Activated naive CD4-positive, alpha-beta T cell treated with anti-CD3 and anti-CD28 coated beads, Interleukin-2, amount 10 ng/mL, durations not matched to agents 7 days and 5 days (primary cell): ENCODE measurements at regions of chr2 and their contacts with region 1.

Region 1: DNA sequence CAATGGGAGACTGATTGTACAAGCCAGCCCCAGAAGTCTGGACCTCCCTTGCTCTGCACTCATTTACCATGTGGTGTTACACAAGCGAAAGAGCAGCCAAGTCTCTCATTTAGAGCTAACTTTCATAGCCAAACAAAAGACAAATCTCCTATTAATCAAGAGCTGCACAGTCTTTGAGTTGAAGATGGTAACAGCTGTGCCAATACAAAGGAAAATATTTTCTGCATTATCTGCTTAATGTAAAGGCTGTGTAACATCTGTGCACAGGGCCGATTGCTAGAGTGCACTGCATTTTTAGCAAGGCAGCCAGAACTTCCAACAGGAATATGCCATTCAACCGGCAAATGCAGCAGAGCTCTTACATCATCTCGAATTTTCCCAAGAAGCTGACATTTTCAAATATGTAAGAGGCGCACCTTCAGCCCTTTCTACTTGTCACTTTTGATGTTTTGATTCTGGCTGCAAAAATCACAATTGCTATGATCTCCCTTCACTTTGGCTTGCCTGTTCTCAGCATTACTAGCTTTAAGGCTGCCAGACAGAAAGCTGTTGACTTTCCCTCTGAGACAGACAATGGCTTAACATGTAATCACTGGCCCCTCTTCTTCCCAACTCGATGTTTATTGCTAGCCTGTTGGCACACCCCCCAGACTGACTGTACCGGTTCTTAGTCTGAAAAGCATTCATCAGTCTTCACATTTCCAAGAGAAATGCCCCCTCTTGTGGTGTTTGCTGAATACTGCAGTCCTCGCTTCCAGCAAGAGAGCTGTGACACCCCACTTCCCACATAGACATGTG is 96.9 kb upstream of the TANK start:
- DNase-seq: peak; percentile 78
- H3K4me3 Mint-ChIP-seq: no peak overlapping the region
- H3K27ac Mint-ChIP-seq: no peak overlapping the region
- H3K4me1 Mint-ChIP-seq: peaks cover 12% of the 10 kb centered on the region
- H3K27me3 Mint-ChIP-seq: peaks cover 8% of the 10 kb centered on the region

Region 2: GRCh38 chr2:160324161-160324800 is 739.1 kb before region 1 on chr2:
- CTCF ChIA-PET with region 1: interaction called, 11 read pairs
- DNase-seq: peak; percentile 53
- H3K4me3 Mint-ChIP-seq: no peak overlapping the region
- H3K27ac Mint-ChIP-seq: no peak overlapping the region
- H3K4me1 Mint-ChIP-seq: peaks cover 77% of the 10 kb centered on the region
- H3K27me3 Mint-ChIP-seq: no peaks in the 10 kb centered on the region

Region 3: DNA sequence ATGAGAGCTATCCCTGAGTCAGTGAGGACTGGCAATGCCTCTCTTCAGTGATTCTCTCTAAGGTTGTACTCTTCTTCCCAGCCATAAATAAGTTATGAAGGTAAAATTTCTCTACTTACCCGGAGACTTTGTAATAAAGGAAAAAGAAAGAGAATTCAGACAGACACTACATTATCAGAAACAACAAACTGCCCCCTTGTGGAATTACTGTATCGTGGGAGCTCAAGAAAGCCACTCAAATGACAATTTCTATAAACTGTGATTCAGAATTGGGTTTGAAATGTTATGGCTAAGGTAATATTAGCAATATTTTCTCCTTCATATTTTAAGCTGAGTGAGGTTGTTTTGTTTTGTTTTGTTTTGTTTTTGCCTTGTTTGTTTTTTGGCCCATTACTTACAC is 59.0 kb before region 1 on chr2:
- CTCF ChIA-PET with region 1: interaction called, 11 read pairs
- DNase-seq: no peak
- H3K4me3 Mint-ChIP-seq: no peak overlapping the region
- H3K27ac Mint-ChIP-seq: no peak overlapping the region
- H3K4me1 Mint-ChIP-seq: no peaks in the 10 kb centered on the region
- H3K27me3 Mint-ChIP-seq: peaks cover 11% of the 10 kb centered on the region

Region 4: GRCh38 chr2:161090411-161090810 is 27.1 kb after region 1 on chr2:
- CTCF ChIA-PET with region 1: interaction called, 11 read pairs
- DNase-seq: peak; percentile 75
- H3K4me3 Mint-ChIP-seq: peak overlapping the region; percentile 37
- H3K27ac Mint-ChIP-seq: peak overlapping the region; percentile 88
- H3K4me1 Mint-ChIP-seq: peaks cover 51% of the 10 kb centered on the region
- H3K27me3 Mint-ChIP-seq: no peaks in the 10 kb centered on the region

Region 5: DNA sequence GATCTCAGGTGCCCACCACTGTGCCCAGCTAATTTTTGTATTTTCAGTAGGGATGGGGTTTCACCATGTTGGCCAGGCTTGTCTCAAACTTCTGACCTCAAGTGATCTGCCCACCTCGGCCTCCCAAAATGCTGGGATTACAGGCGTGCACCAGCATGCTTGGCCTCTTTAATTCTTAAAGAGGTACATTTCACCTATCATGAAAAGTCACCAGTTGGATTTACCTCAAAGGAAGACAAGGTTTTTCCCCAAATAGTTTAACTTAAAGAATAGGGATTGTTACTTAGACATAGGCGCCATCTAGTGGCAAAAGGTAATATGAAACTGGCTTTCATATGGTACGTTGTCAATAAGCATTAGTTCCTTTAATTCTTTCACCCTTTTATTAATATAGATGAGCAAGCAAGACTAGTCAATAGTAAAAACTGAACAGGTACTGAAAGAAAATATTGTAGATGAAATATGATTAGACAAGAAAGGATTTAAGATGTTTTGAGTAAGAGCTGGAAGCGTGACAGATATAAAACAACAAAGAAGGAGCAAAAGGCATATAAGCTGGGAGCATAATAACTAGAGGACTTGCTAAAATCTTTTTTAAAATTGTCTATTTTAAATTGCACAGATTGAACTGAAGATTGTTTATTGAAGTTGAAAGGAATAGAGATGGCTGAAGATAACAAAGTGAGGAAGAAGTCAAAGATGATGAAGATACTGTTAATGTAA is 209.8 kb after region 1 on chr2:
- CTCF ChIA-PET with region 1: interaction called, 11 read pairs
- DNase-seq: no peak
- H3K4me3 Mint-ChIP-seq: no peak overlapping the region
- H3K27ac Mint-ChIP-seq: no peak overlapping the region
- H3K4me1 Mint-ChIP-seq: no peaks in the 10 kb centered on the region
- H3K27me3 Mint-ChIP-seq: peaks cover 14% of the 10 kb centered on the region